ENCODE measurements at regions of chr10 and their contacts with region 1.

Region 1: DNA sequence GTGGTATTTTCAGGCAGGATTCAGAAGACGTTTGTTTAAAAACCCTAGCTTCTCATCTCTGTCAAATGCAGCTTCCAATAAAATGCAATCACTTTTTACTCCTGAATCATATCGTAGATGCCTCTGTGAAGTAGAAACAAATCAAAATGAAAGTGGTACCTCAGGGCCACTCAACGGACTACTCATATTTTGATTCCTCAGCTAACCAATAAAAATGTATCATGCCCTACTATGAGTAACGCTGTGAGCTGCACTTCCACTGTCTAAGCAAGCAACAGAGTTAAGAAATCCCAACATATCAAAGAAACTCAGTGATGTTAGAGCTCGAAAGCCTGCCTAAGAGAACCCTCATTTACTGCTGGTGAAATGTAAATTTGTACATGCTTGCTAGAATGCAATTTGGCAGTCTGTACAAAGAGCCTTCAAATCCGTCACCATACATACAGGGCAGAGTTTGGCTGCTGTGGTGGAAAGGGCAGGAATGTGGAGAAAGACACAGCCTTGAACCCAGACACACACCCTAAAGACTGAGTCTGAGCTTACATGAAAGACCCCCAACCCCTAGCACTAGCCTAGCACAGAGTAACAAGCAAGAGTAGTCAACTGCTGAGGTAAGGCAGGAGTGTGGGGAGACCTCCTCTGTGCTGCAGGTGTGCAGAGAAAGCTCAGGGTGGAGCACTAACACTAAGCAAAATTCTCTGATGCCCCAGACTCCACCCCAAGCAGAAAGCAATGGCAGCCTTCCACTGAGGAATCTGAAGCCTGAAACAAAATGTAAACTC is 151.5 kb downstream of the ANK3 start:
- DNase-seq: peak; percentile 61
- H3K4me3 Mint-ChIP-seq: no peak overlapping the region
- H3K27ac Mint-ChIP-seq: no peak overlapping the region
- H3K4me1 Mint-ChIP-seq: peaks cover 39% of the 10 kb centered on the region
- H3K27me3 Mint-ChIP-seq: no peaks in the 10 kb centered on the region
- CTCF ChIP-seq: peak; percentile 42

Region 2: GRCh38 chr10:60282771-60283353 is 44.7 kb after region 1 on chr10:
- CTCF ChIA-PET with region 1: no interaction called
- intact Hi-C with region 1: loop called (anchors 5 kb)
- DNase-seq: peak; percentile 49
- H3K4me3 Mint-ChIP-seq: peak overlapping the region; percentile 57
- H3K27ac Mint-ChIP-seq: peak overlapping the region; percentile 68
- H3K4me1 Mint-ChIP-seq: peaks cover 53% of the 10 kb centered on the region
- H3K27me3 Mint-ChIP-seq: no peaks in the 10 kb centered on the region
- CTCF ChIP-seq: no peak

Region 3: DNA sequence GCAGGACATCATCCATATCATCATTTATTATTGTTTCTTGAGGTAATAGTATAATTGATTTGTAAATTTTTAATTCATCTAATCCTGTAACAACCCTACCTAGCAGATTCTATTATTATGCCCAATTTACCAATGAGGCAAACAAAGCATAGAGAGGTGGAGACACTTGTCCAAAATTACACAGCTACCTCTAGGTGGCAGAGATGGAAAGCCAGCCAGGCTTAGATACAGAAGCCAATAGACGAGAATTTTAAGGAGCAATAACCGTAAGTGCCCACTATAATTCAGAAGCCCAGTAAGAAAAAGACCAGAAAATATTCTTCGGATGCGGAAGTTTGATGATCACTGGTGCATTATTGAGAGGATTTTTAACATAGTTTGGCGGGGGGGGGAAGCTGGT is 97.5 kb after region 1 on chr10:
- CTCF ChIA-PET with region 1: interaction called, 4 read pairs
- intact Hi-C with region 1: loop called (anchors 1 kb)
- DNase-seq: peak; percentile 7
- H3K4me3 Mint-ChIP-seq: no peak overlapping the region
- H3K27ac Mint-ChIP-seq: no peak overlapping the region
- H3K4me1 Mint-ChIP-seq: peaks cover 8% of the 10 kb centered on the region
- H3K27me3 Mint-ChIP-seq: no peaks in the 10 kb centered on the region
- CTCF ChIP-seq: no peak

Region 4: DNA sequence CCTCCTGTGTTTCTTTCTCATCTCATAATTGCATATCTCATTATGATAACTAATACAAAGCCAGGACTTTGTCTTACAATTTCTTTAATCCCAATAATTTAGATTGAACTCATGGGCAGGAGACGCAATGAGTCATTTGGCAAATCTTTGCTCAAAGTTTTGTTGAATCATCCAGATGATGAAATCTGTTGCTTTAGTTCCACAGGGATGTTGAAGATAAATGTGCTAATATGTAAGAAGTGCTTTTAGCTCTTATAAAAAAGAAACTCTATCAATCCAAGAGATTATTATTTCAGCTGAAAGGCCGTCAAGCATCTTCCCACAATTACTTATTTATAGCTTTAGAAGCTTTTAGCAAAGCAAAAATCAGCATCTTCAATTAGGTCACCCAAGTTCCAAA is 188.2 kb after region 1 on chr10:
- CTCF ChIA-PET with region 1: interaction called, 10 read pairs
- intact Hi-C with region 1: no loop called
- DNase-seq: peak; percentile 26
- H3K4me3 Mint-ChIP-seq: peak overlapping the region; percentile 10
- H3K27ac Mint-ChIP-seq: peak overlapping the region; percentile 93
- H3K4me1 Mint-ChIP-seq: peaks cover 73% of the 10 kb centered on the region
- H3K27me3 Mint-ChIP-seq: no peaks in the 10 kb centered on the region
- CTCF ChIP-seq: no peak

Region 5: GRCh38 chr10:60434418-60435046 is 196.4 kb after region 1 on chr10:
- CTCF ChIA-PET with region 1: interaction called, 13 read pairs
- intact Hi-C with region 1: loop called (anchors 1 kb)
- DNase-seq: peak; percentile 57
- H3K4me3 Mint-ChIP-seq: no peak overlapping the region
- H3K27ac Mint-ChIP-seq: no peak overlapping the region
- H3K4me1 Mint-ChIP-seq: peaks cover 23% of the 10 kb centered on the region
- H3K27me3 Mint-ChIP-seq: no peaks in the 10 kb centered on the region
- CTCF ChIP-seq: peak; percentile 73